PC-9 (cell line): ENCODE measurements at regions of chr17 and their contacts with region 1.

Region 1: DNA sequence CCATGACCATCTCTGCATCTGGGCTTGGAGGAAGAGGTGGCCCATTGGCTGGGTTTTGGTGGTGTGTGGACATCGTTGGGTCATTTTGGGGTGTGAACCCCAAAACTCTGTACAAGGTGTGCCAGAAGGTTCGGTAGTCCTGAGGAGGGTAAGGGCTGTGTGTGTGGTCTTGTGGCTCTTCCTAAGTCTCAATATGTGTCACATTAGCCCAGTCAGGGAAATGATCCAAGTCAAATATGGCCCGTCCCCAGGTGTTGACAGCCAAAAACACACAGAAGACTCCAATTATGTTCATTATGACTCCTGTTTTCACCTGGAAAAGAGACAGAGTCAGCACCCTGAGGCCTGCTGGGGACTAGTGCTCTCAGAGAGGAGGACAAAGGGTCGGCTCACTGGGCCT is 27.1 kb downstream of the SLC13A5 start:
- DNase-seq: peak in 1 of 2 experiments; percentile 5
- H3K4me3 ChIP-seq: no peak overlapping the region
- H3K27ac ChIP-seq: no peak overlapping the region
- H3K4me1 ChIP-seq: no peaks in the 10 kb centered on the region
- H3K27me3 ChIP-seq: no peaks in the 10 kb centered on the region
- CTCF ChIP-seq: no peak

Region 2: GRCh38 chr17:6903326-6903900 is 217.4 kb after region 1 on chr17:
- CTCF ChIA-PET with region 1: interaction called, 12 read pairs
- POLR2A ChIA-PET with region 1: no interaction called
- intact Hi-C with region 1: no loop called
- DNase-seq: no peak
- H3K4me3 ChIP-seq: no peak overlapping the region
- H3K27ac ChIP-seq: no peak overlapping the region
- H3K4me1 ChIP-seq: peaks cover 10% of the 10 kb centered on the region; the same call in 1 of the 2 replicates
- H3K27me3 ChIP-seq: no peaks in the 10 kb centered on the region
- CTCF ChIP-seq: no peak